HEK293T (cell line): ENCODE measurements at regions of chr11 and their contacts with region 1.

Region 1: GRCh38 chr11:43311791-43312607 is at the start of gene API5:
- DNase-seq: peak; percentile 77

Region 2: GRCh38 chr11:43289368-43289767 is 22.6 kb before region 1 on chr11:
- CTCF ChIA-PET with region 1: no interaction called
- POLR2A ChIA-PET with region 1: no interaction called
- DNase-seq: no peak

Region 3: GRCh38 chr11:43358801-43359421 is 46.9 kb after region 1 on chr11 and contains the start of gene TTC17:
- CTCF ChIA-PET with region 1: no interaction called
- POLR2A ChIA-PET with region 1: interaction called, 20 read pairs
- DNase-seq: peak; percentile 91